ENCODE measurements at regions of chr17 and their contacts with region 1.

Region 1: GRCh38 chr17:44464037-44464436 is 39.2 kb downstream of the GPATCH8 start:
- DNase-seq: no peak
- H3K4me3 ChIP-seq: no peak overlapping the region
- H3K27ac ChIP-seq: no peak overlapping the region
- H3K4me1 ChIP-seq: peaks cover 5% of the 10 kb centered on the region
- H3K27me3 ChIP-seq: no peaks in the 10 kb centered on the region
- CTCF ChIP-seq: no peak
- POLR2A ChIP-seq: no peak

Region 2: DNA sequence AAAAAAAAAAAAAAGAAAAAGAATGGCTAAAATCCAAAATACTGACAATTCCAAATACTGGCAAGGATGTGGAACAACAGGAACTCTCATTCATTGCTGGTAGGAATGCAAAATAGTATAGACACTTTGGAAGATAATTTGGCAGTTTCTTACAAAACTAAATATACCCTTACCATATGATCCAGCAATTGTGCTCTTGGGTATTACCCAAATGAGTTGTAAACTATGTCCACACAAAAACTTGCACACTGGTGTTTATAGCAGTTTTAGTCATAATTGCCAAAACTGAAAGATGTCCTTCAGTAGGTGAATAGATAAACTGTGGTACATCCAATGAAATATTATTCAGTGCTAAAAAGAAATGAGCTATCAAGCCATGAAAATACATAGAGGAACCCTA is 183.7 kb after region 1 on chr17:
- CTCF ChIA-PET with region 1: no interaction called
- POLR2A ChIA-PET with region 1: interaction called, 13 read pairs
- dilution Hi-C with region 1: no loop called
- intact Hi-C with region 1: no loop called
- DNase-seq: no peak
- H3K4me3 ChIP-seq: no peak overlapping the region
- H3K27ac ChIP-seq: no peak overlapping the region
- H3K4me1 ChIP-seq: no peaks in the 10 kb centered on the region
- H3K27me3 ChIP-seq: peaks cover 5 to 18% of the 10 kb centered on the region in 2 experiments
- CTCF ChIP-seq: no peak
- POLR2A ChIP-seq: no peak

Measured in endothelial cell of umbilical vein (primary cell).